ENCODE measurements at regions of chr1 and their contacts with region 1.

Region 1: GRCh38 chr1:206663832-206664652 is 20.7 kb upstream of the MAPKAPK2 start:
- DNase-seq: peak; percentile 78
- H3K4me3 ChIP-seq: peak overlapping the region; percentile 3
- H3K27ac ChIP-seq: no peak overlapping the region
- H3K4me1 ChIP-seq: no peaks in the 10 kb centered on the region
- H3K27me3 ChIP-seq: peaks cover 7% of the 10 kb centered on the region
- CTCF ChIP-seq: peak; percentile 92

Region 2: GRCh38 chr1:206489980-206490770 is 173.9 kb before region 1 on chr1:
- intact Hi-C with region 1: loop called (anchors 5 kb)
- DNase-seq: peak; percentile 74
- H3K4me3 ChIP-seq: no peak overlapping the region
- H3K27ac ChIP-seq: no peak overlapping the region
- H3K4me1 ChIP-seq: no peaks in the 10 kb centered on the region
- H3K27me3 ChIP-seq: no peaks in the 10 kb centered on the region
- CTCF ChIP-seq: peak; percentile 71

Region 3: DNA sequence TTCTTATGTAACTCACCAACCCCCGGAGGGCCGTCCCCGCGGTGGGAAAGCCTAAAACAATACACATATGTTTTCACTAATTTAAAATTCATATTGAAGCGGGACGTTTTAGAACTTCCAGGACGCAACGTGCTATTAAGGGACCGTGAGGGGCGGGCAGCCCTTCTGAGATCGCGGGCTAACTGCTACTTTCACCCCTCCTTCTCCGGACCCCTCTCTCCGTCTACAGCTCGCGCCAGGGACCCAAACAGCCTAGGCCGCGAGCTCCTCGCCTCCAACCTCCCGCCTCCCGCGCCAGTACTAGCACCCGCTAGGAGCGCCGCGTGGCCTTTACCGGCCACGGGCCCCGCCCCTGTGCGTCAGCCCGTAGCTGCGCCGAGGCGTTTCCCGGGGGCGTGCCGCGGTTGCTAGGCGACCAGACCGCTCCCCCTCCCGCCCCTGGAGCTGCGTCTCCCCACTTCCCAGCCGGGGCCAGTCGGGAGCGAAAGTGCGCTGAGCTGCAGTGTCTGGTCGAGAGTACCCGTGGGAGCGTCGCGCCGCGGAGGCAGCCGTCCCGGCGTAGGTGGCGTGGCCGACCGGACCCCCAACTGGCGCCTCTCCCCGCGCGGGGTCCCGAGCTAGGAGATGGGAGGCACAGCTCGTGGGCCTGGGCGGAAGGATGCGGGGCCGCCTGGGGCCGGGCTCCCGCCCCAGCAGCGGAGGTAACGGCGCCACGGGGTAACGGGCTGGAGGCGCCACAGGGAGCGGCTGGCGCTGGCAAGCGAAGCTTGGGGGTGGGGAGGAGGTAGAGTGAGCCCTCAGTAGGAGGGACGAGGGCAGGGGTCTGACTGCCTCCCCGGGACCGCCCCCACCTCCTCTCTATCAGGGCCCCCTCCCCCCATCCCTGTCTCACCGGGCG is 28.7 kb before region 1 on chr1 and contains the start of gene DYRK3:
- intact Hi-C with region 1: loop called (anchors 1 kb)
- DNase-seq: peak; percentile 95
- H3K4me3 ChIP-seq: peak within 1 kb of the TSS; percentile 94
- H3K27ac ChIP-seq: peak within 1 kb of the TSS; percentile 68
- H3K4me1 ChIP-seq: peaks cover 6% of the 10 kb centered on the region
- H3K27me3 ChIP-seq: no peaks in the 10 kb centered on the region
- CTCF ChIP-seq: no peak
- total RNA-seq, gene DYRK3: 0.86 to 1.9 TPM

Measured in colonic mucosa (tissue), 4 donors.